GM23248 (cell line): ENCODE measurements at regions of chr1 and their contacts with region 1.

Region 1: DNA sequence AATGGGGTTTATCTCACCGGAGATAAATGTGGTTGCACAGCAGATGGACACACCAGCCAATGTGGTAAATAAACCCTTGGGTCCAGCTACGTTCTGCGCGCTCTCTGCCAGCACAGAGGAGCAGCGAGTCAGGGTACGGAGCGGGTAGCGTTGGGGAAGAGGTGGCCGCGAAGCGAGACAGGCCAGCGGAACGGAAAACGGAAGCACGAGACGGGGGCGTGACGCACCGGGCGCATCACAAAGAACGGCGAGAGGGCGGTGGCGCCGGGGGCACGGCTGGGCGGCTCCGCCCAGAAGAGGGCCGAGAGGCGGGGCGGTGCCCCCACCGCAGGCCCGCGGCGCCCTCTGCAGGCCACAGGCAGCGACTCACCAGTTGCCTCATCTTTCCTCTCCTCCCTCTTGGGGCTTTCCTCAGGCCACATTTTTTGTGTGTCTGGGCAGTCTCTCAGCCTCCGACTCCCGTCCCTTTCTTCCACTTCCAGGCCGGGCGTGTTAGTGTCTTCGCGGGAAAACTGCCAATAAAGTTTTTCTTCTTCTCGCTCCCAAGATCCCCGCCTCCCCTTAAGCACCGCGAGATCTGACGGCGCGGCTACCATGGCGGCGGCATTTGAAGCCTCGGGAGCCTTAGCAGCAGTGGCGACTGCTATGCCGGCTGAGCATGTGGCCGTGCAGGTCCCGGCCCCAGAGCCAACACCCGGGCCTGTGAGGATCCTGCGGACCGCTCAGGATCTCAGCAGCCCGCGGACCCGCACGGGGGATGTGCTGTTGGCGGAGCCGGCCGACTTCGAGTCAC is at the start of gene DDX20:
- DNase-seq: peak; percentile 99
- H3K4me3 ChIP-seq: peak within 1 kb of the TSS; percentile 94
- H3K27ac ChIP-seq: peak within 1 kb of the TSS; percentile 94
- H3K4me1 ChIP-seq: peaks cover 6% of the 10 kb centered on the region; the same call in 1 of the 2 replicates
- H3K27me3 ChIP-seq: no peaks in the 10 kb centered on the region
- total RNA-seq, gene DDX20: 20.1 and 24.2 TPM in 2 replicates

Region 2: DNA sequence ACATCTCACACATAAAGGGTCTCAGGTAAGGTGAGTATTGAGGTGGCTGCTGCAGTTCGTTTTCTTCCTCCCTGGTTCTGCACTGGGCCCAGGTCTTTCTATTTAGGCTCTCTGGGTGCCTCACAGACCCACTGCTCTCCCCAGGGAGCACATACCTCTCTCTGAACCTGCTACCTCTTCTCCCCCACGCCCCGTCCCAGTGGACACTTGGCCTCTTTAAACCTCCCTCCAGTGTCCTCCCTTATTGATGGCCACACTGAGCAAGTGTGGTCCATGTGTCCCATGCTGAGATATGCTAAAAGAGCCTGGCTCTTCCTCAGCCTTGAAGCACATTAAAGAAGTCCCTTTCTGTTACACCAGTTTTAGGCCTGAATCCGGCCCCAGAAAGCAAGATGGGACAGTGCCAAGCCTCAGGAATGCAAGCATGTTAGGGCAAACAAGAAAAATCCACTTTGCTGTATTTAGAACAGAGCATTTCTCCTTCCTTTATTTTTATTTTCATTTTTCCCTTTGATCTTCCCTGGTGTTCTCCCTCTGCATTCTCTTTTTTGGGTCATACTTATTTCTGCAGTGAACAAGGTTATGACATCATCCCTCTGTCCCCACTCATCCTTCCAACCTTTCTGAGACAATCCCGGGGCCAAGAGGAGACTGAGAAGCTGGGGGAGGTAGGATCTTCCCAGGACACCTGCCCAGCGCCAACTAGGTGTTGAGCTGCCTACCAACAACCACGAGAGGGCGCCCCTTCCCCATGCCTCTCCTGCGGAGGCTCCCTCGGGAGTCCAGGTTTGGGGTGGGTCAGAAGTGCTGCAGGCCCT is 533.0 kb before region 1 on chr1:
- in situ Hi-C with region 1: loop called (anchors 25 kb)
- DNase-seq: peak; percentile 81
- H3K4me3 ChIP-seq: no peak overlapping the region
- H3K27ac ChIP-seq: no peak overlapping the region
- H3K4me1 ChIP-seq: peaks cover 5% of the 10 kb centered on the region
- H3K27me3 ChIP-seq: no peaks in the 10 kb centered on the region